ENCODE measurements at regions of chr18 and their contacts with region 1.

Region 1: GRCh38 chr18:47100214-47100831 is 50.0 kb downstream of the HDHD2 start:
- DNase-seq: no peak

Region 2: DNA sequence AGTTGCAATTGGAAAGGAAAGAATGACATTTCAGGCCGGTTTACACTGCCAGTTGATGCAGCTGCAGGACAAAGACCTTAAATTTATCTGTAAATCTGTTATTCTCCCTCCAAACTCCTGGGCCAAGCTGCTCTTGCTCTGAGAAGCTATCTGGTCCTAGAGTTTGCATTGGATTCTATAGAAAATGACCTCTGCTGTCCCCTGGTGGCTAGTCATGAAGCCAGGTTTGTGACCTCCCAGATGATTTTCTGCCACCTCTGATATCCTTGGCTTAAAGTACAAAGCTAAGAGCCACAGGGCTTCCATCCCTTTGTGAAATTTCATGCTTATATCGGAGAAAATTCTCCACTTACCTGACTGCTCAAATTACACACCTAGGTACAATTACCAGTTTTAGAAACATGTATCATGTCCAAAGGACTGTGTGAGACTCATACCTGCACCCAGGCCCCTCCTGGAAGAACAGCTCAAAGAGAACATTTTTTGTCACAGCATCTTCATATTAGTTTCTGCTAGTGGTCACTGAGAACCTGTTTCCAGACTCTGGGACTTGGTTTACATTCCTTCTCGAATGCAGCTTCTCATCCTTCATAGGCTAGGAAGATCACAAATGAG is 104.7 kb after region 1 on chr18:
- intact Hi-C with region 1: loop called (anchors 1 kb)
- DNase-seq: no peak

Region 3: DNA sequence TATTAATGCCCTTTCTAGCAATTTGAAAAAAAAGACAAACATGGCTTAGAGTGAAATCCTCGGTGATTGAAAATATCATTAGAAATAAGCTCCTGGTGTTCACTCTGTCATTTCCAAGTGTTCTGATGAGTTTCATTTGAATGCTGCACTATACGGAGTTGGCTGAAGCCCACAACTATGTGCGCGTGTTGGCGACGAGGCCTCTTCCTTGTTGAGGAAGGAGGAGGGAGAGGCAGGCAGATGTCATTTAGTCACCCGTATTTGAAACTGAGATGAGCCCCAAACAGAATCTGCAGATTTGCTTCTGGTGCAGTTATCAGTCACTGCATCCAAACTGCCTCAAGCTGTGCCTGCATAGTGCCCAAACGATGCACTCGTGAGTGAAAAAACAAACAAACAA is 174.6 kb after region 1 on chr18:
- intact Hi-C with region 1: no loop called
- DNase-seq: no peak

Region 4: GRCh38 chr18:47832348-47832747 is 732.0 kb after region 1 on chr18:
- intact Hi-C with region 1: no loop called
- DNase-seq: no peak